ENCODE measurements at regions of chr15 and their contacts with region 1.

Region 1: GRCh38 chr15:69265347-69265955 is 33.3 kb upstream of the PAQR5 start:
- DNase-seq: no peak
- ATAC-seq: no peak
- H3K4me3 ChIP-seq: no peak overlapping the region
- H3K27ac ChIP-seq: no peak overlapping the region
- H3K4me1 ChIP-seq: no peaks in the 10 kb centered on the region
- H3K27me3 ChIP-seq: no peaks in the 10 kb centered on the region
- CTCF ChIP-seq: peak; percentile 34 to 49 (median 42); a peak in 4 of 6 replicates
- EP300 ChIP-seq: no peak
- POLR2A ChIP-seq: no peak
- RAD21 ChIP-seq: 0 out of 2 replicates have a peak, but pooled peaks have one; percentile 18

Region 2: DNA sequence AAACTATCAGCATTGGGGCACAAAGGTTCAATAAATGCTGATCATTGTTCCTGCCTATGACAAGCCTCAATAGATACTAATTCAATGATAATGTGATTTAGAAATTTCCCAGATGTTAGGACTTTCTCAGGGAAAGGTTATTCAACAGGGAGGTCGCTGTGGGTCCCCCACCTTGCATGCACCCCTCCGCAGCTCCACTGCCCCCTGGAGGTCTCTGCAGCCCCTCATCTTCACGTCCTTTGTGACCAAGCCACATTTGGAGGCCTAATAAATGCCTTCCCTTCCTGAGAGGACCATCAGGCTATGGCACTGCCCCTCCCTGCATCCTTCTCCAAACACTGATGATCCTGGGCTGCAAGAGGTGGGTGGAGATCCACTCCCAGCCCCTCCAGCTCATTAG is 200.8 kb before region 1 on chr15:
- CTCF ChIA-PET with region 1: interaction called, 12 read pairs
- POLR2A ChIA-PET with region 1: interaction called, 3 read pairs
- RAD21 ChIA-PET with region 1: no interaction called
- SMC1A ChIA-PET with region 1: interaction called, 9 read pairs
- in situ Hi-C with region 1: loop called (anchors 5 kb)
- intact Hi-C with region 1: loop called (anchors 1 kb)
- DNase-seq: no peak
- ATAC-seq: no peak
- H3K4me3 ChIP-seq: no peak overlapping the region
- H3K27ac ChIP-seq: no peak overlapping the region
- H3K4me1 ChIP-seq: no peaks in the 10 kb centered on the region
- H3K27me3 ChIP-seq: no peaks in the 10 kb centered on the region
- CTCF ChIP-seq: no peak
- EP300 ChIP-seq: no peak
- POLR2A ChIP-seq: no peak
- RAD21 ChIP-seq: no peak

Region 3: GRCh38 chr15:69380100-69380727 is 114.8 kb after region 1 on chr15:
- CTCF ChIA-PET with region 1: no interaction called
- POLR2A ChIA-PET with region 1: no interaction called
- RAD21 ChIA-PET with region 1: no interaction called
- SMC1A ChIA-PET with region 1: no interaction called
- in situ Hi-C with region 1: no loop called
- intact Hi-C with region 1: no loop called
- DNase-seq: no peak
- ATAC-seq: no peak
- H3K4me3 ChIP-seq: no peak overlapping the region
- H3K27ac ChIP-seq: no peak overlapping the region
- H3K4me1 ChIP-seq: no peaks in the 10 kb centered on the region
- H3K27me3 ChIP-seq: peaks cover 0 to 1% of the 10 kb centered on the region in 2 experiments; a peak in 2 of 4 replicates
- CTCF ChIP-seq: no peak
- EP300 ChIP-seq: no peak
- POLR2A ChIP-seq: no peak
- RAD21 ChIP-seq: no peak

Region 4: DNA sequence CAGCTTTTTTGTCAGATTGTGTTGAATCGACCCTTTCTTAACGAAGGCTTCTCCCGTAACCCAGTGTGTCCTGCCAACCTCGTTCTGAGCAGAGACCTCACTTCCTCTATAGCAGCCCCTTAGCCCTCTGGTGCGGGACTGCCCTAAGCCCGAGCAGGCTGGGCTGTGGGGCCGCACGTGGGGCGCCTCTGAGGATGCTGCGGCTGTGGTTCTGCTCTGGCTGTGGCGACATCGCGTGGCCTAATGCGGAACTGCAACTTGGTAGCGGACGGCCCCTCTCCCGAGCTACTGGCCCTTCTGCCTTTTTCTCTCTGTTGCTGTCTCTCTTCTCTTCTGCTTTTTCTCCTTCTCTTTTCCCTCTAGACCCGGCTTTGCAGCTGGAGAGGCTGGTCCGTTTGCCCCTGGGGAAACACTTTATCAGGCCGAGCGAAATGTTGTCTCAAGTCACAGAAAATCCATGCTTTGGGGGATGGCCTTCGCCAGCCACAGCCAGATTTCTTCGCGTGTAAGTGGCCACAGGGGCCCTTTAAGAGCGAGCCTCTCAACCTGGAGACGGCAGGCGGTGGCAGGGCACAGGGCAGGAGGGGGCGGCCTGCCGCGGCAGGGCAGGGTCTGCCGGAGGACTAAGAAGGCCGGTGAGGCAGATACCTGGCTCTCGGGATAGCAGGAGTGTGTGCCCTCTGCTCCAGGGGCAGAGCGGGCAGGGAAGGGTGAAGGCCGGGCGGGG is 129.3 kb after region 1 on chr15:
- CTCF ChIA-PET with region 1: interaction called, 3 read pairs
- POLR2A ChIA-PET with region 1: no interaction called
- RAD21 ChIA-PET with region 1: interaction called, 3 read pairs
- SMC1A ChIA-PET with region 1: no interaction called
- in situ Hi-C with region 1: no loop called
- intact Hi-C with region 1: loop called (anchors 10 kb)
- DNase-seq: no peak
- ATAC-seq: peak; percentile 99
- H3K4me3 ChIP-seq: no peak overlapping the region
- H3K27ac ChIP-seq: no peak overlapping the region
- H3K4me1 ChIP-seq: no peaks in the 10 kb centered on the region
- H3K27me3 ChIP-seq: no peaks in the 10 kb centered on the region
- CTCF ChIP-seq: peak; percentile 85 to 93 (median 85)
- EP300 ChIP-seq: no peak
- POLR2A ChIP-seq: no peak
- RAD21 ChIP-seq: peak; percentile 61

Measured in GM12878 (cell line).